Adrenal gland (tissue), 19 donors: ENCODE measurements at regions of chr7 and their contacts with region 1.

Region 1: GRCh38 chr7:135672560-135673359 is 10.4 kb downstream of the STMP1 start:
- DNase-seq: peak in 4 of 7 donors; percentile 34 to 55 (median 46)
- H3K4me3 ChIP-seq: no peak overlapping the region
- H3K27ac ChIP-seq: peak overlapping the region in 3 of 5 donors; percentile 15 to 63 (median 45)
- H3K4me1 ChIP-seq: peaks cover 19 to 38% of the 10 kb centered on the region in 2 donors
- H3K27me3 ChIP-seq: no peaks in the 10 kb centered on the region
- CTCF ChIP-seq: peak; percentile 67 to 85 (median 76)
- POLR2A ChIP-seq: no peak

Region 2: GRCh38 chr7:135349746-135350379 is 322.9 kb before region 1 on chr7:
- intact Hi-C with region 1: no loop called
- DNase-seq: no peak
- H3K4me3 ChIP-seq: no peak overlapping the region
- H3K27ac ChIP-seq: no peak overlapping the region
- H3K4me1 ChIP-seq: no peaks in the 10 kb centered on the region
- H3K27me3 ChIP-seq: no peaks in the 10 kb centered on the region
- CTCF ChIP-seq: no peak
- POLR2A ChIP-seq: no peak

Region 3: GRCh38 chr7:135558337-135558767 is 114.4 kb before region 1 on chr7:
- intact Hi-C with region 1: no loop called
- DNase-seq: peak; percentile 41 to 77 (median 48)
- H3K4me3 ChIP-seq: peak overlapping the region; percentile 19 to 85 (median 76)
- H3K27ac ChIP-seq: peak overlapping the region; percentile 55 to 99 (median 93)
- H3K4me1 ChIP-seq: peaks cover 5 to 11% of the 10 kb centered on the region in 2 donors
- H3K27me3 ChIP-seq: no peaks in the 10 kb centered on the region
- CTCF ChIP-seq: peak in 5 of 6 experiments; percentile 26 to 57 (median 49)
- POLR2A ChIP-seq: no peak

Region 4: DNA sequence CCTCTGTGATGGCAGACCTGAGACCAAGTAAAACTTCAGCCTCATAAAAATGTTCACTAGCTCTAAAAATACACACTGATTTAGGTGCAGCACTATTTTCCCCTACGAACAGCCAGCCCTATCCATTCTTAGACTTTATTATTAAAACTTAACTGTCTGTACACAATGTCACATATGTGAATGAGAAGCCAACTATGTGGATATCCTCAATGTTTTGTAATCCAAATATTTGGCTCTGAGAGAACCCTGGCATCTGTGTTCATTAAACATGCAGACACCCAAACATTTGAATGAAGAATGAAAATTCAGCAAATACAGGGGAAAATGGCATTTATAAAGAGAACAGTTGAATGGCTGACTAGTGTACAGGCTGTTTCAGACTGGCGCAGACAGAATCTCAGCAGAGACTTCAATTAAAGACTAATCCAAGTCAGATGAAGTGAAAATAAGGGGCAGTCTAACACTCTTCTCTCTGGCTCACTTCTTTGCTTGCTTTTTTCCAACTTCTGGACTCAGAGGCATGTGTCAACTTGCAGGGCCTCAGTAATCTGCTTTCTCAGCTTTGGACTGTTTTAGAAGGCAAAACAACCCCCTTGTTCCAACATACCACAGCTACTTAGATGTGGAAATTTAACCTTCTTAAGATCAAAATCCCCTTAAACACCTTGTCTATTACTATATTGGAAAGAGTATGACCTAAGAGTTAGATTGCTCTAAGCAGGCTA is 123.2 kb after region 1 on chr7:
- intact Hi-C with region 1: loop called in 1 of 2 experiments (anchors 10 kb)
- DNase-seq: no peak
- H3K4me3 ChIP-seq: no peak overlapping the region
- H3K27ac ChIP-seq: peak overlapping the region in 1 of 5 donors; percentile 39
- H3K4me1 ChIP-seq: no peaks in the 10 kb centered on the region
- H3K27me3 ChIP-seq: no peaks in the 10 kb centered on the region
- CTCF ChIP-seq: no peak
- POLR2A ChIP-seq: no peak

Region 5: DNA sequence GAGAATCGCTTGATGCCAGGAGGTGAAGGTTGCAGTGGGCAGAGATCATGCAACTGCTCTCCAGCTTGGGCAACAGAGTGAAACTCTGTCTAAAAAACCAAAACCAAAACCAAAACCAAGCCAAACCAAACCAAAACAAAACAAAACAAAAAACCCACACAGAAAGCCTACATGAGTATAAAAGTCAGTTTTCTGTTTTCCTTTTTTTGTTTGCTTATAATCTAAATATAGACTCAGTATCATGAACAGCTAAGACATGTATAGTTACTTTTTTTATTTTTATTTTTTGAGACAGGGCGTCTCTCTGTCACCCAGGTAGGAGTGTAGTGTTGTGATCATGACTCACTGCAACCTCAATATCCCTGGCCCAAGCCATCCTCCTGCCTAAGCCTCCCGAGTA is 321.2 kb after region 1 on chr7:
- intact Hi-C with region 1: no loop called
- DNase-seq: no peak
- H3K4me3 ChIP-seq: no peak overlapping the region
- H3K27ac ChIP-seq: no peak overlapping the region
- H3K4me1 ChIP-seq: peaks cover 0 to 6% of the 10 kb centered on the region in 2 donors
- H3K27me3 ChIP-seq: no peaks in the 10 kb centered on the region
- CTCF ChIP-seq: no peak
- POLR2A ChIP-seq: no peak

Region 6: GRCh38 chr7:136677471-136678365 is 1005.0 kb after region 1 on chr7:
- intact Hi-C with region 1: no loop called
- DNase-seq: no peak
- H3K4me3 ChIP-seq: no peak overlapping the region
- H3K27ac ChIP-seq: no peak overlapping the region
- H3K4me1 ChIP-seq: no peaks in the 10 kb centered on the region
- H3K27me3 ChIP-seq: no peaks in the 10 kb centered on the region
- CTCF ChIP-seq: no peak
- POLR2A ChIP-seq: no peak